ENCODE measurements at regions of chr19 and their contacts with region 1.

Region 1: GRCh38 chr19:54203151-54203611 is 2.5 kb downstream of the RPS9 start:
- DNase-seq: no peak
- H3K4me3 ChIP-seq: peak overlapping the region in 1 of 4 donors; percentile 8
- H3K27ac ChIP-seq: no peak overlapping the region
- H3K4me1 ChIP-seq: peaks cover 0 to 75% (median 59%) of the 10 kb centered on the region in 4 donors
- H3K27me3 ChIP-seq: no peaks in the 10 kb centered on the region
- CTCF ChIP-seq: no peak
- EP300 ChIP-seq: no peak
- POLR2A ChIP-seq: no peak

Region 2: GRCh38 chr19:54159352-54160181 is 43.6 kb before region 1 on chr19 and contains the start of gene LENG1:
- intact Hi-C with region 1: loop called (anchors 5 kb)
- DNase-seq: peak; percentile 100
- H3K4me3 ChIP-seq: peak within 1 kb of the TSS; percentile 69 to 83 (median 72)
- H3K27ac ChIP-seq: peak within 1 kb of the TSS; percentile 96 to 98 (median 96)
- H3K4me1 ChIP-seq: peaks cover 0 to 52% (median 49%) of the 10 kb centered on the region in 4 donors
- H3K27me3 ChIP-seq: peaks cover 4 to 5% (median 4%) of the 10 kb centered on the region in 3 donors
- CTCF ChIP-seq: no peak
- EP300 ChIP-seq: no peak
- POLR2A ChIP-seq: peak; percentile 41 to 53
- total RNA-seq, gene LENG1: 7.8 to 10.0 (median 8.7) TPM